ENCODE measurements at regions of chr6 and their contacts with region 1.

Region 1: GRCh38 chr6:105374010-105374420 is 28.9 kb downstream of the PREP start:
- DNase-seq: peak; percentile 87
- ATAC-seq: peak; percentile 100
- H3K4me3 ChIP-seq: no peak overlapping the region
- H3K27ac ChIP-seq: peak overlapping the region; percentile 39
- H3K4me1 ChIP-seq: peaks cover 30% of the 10 kb centered on the region
- H3K27me3 ChIP-seq: no peaks in the 10 kb centered on the region
- CTCF ChIP-seq: no peak
- EP300 ChIP-seq: no peak
- POLR2A ChIP-seq: no peak
- RAD21 ChIP-seq: no peak

Region 2: DNA sequence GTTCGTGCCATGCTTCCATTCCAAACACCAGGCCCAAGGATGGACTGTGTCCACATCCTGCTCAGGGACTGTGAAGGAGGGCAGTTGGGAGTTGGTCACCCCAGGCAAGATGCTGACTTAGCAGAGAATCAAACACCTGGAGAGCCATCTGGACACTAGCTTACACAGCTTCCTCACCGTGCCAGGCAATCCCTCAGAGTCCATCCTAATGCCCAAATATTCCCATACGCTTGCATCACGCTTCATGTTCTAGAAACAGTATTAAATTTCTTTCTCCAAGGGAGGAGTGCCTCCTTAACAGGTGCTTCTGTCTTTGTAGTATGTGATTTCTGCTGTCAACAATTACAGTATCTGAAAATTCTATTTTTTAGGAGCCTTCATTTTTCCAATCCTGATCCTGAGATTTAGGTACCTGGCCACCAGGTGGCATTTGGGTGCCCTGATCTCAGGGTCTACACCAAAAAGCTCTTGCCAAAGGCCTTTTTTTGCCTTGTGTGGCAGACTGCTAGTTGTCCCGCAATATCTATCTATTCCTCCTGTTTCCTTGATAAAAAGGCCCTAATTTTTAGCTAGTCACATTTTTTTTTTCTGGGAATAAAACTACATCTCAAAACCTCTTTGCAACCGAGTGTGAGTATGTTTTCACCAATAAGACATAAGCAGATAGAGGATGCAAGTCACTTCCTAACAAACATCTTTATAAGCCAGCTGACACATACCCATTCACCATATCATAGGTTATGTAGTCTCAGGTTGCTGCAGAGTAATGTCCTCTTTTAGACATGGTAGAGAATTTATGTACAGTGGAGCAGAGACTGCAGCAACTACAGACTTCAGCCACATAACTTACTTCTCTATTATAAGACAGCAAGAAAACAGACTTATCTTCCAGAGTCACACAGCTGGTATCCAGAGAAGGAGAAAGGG is 56.1 kb before region 1 on chr6:
- CTCF ChIA-PET with region 1: no interaction called
- POLR2A ChIA-PET with region 1: no interaction called
- in situ Hi-C with region 1: no loop called
- intact Hi-C with region 1: loop called (anchors 5 kb)
- DNase-seq: peak; percentile 8
- ATAC-seq: peak; percentile 71
- H3K4me3 ChIP-seq: no peak overlapping the region
- H3K27ac ChIP-seq: no peak overlapping the region
- H3K4me1 ChIP-seq: no peaks in the 10 kb centered on the region; the same call in 1 of the 2 replicates
- H3K27me3 ChIP-seq: no peaks in the 10 kb centered on the region
- CTCF ChIP-seq: peak; percentile 32; the same call in 1 of the 2 replicates
- EP300 ChIP-seq: no peak
- POLR2A ChIP-seq: no peak
- RAD21 ChIP-seq: no peak

Region 3: DNA sequence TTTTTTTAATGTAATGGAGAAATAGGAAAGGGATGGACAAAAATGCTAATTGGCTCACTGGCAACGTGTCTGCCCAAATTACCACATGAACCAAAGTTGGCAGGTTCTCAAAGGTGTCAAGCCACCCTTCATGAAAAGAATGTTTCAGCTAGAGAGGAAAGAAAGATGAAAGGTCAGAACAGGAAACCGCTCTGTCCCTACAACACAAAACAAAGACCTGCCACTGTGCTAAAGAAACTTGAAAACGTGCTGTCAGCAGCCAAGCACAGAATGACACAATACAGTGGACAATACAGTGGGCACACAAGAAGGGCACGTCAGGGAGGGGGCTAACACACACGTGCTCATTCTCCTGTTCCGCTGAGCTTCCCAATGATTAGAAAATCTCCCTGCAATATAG is 24.0 kb after region 1 on chr6:
- CTCF ChIA-PET with region 1: no interaction called
- POLR2A ChIA-PET with region 1: interaction called, 4 read pairs
- in situ Hi-C with region 1: no loop called
- intact Hi-C with region 1: loop called (anchors 2 kb)
- DNase-seq: peak; percentile 63
- ATAC-seq: 0 out of 3 replicates have a peak, but pooled peaks have one; percentile 9
- H3K4me3 ChIP-seq: peak overlapping the region in 1 of 3 experiments; percentile 15; a peak in 1 of 6 replicates
- H3K27ac ChIP-seq: peak overlapping the region; percentile 19
- H3K4me1 ChIP-seq: peaks cover 45% of the 10 kb centered on the region
- H3K27me3 ChIP-seq: no peaks in the 10 kb centered on the region
- CTCF ChIP-seq: no peak
- EP300 ChIP-seq: peak in 1 of 2 experiments; percentile 20; a peak in 1 of 4 replicates
- POLR2A ChIP-seq: no peak
- RAD21 ChIP-seq: no peak